H1 (cell line): ENCODE measurements at regions of chr1 and their contacts with region 1.

Region 1: DNA sequence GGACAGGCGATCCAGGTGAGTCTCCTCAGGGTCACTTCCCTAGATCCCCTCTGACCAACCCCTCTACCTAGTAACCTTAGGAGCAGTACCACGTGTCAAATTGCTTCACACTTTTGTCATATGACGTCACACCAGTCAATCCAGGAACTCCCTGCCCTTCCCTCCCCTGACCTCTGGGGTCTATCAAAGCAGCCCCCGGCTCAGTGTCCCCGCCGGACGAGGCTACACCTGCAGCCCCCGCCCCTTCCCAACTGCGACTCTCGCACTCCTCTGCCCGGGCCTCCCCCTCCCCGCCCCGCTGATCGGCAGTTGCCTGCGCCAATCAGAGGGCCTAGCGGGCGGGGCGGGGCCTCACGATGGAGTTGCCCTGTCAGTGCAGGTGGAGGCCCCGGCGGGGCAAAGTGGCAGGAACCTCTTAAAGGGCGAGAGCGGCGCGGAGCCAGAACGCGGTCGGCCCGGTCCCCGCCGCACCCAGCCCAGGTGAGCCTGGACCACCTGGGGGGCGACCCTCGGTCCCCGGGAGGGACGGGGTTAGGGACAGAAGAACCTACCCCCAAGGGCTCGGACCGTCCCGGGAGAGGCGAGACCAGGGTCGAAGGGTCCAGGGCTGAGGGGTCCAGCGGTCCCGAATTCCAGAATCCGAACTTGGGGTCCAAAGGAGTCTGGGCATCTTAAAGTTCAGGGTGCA is 27.5 kb upstream of the EPB41 start:
- DNase-seq: peak; percentile 70 to 98
- H3K4me3 ChIP-seq: peak overlapping the region; percentile 76 to 88 (median 76)
- H3K27ac ChIP-seq: no peak overlapping the region
- H3K4me1 ChIP-seq: peaks cover 18 to 27% (median 22%) of the 10 kb centered on the region in 4 experiments
- H3K27me3 ChIP-seq: peaks cover 0 to 11% (median 6%) of the 10 kb centered on the region in 4 experiments; a peak in 4 of 7 replicates
- CTCF ChIP-seq: no peak; a peak in 1 of 4 replicates
- EP300 ChIP-seq: no peak
- POLR2A ChIP-seq: no peak
- RAD21 ChIP-seq: no peak

Region 2: GRCh38 chr1:28680141-28680540 is 206.7 kb before region 1 on chr1:
- CTCF ChIA-PET with region 1: no interaction called
- POLR2A ChIA-PET with region 1: no interaction called
- DNase-seq: no peak
- H3K4me3 ChIP-seq: no peak overlapping the region
- H3K27ac ChIP-seq: no peak overlapping the region
- H3K4me1 ChIP-seq: no peaks in the 10 kb centered on the region
- H3K27me3 ChIP-seq: no peaks in the 10 kb centered on the region
- CTCF ChIP-seq: no peak
- EP300 ChIP-seq: no peak
- POLR2A ChIP-seq: no peak
- RAD21 ChIP-seq: no peak

Region 3: GRCh38 chr1:28703629-28704028 is 183.2 kb before region 1 on chr1:
- CTCF ChIA-PET with region 1: no interaction called
- POLR2A ChIA-PET with region 1: no interaction called
- DNase-seq: no peak
- H3K4me3 ChIP-seq: no peak overlapping the region
- H3K27ac ChIP-seq: no peak overlapping the region
- H3K4me1 ChIP-seq: no peaks in the 10 kb centered on the region
- H3K27me3 ChIP-seq: no peaks in the 10 kb centered on the region
- CTCF ChIP-seq: no peak
- EP300 ChIP-seq: no peak
- POLR2A ChIP-seq: no peak
- RAD21 ChIP-seq: no peak

Region 4: GRCh38 chr1:28792644-28793121 is 94.2 kb before region 1 on chr1:
- CTCF ChIA-PET with region 1: interaction called, 17 read pairs
- POLR2A ChIA-PET with region 1: no interaction called
- DNase-seq: no peak
- H3K4me3 ChIP-seq: no peak overlapping the region
- H3K27ac ChIP-seq: no peak overlapping the region
- H3K4me1 ChIP-seq: peaks cover 0 to 8% (median 2%) of the 10 kb centered on the region in 4 experiments; a peak in 2 of 7 replicates
- H3K27me3 ChIP-seq: no peaks in the 10 kb centered on the region
- CTCF ChIP-seq: no peak
- EP300 ChIP-seq: no peak
- POLR2A ChIP-seq: no peak
- RAD21 ChIP-seq: no peak

Region 5: GRCh38 chr1:28914228-28915030 is 27.6 kb after region 1 on chr1 and contains the start of gene EPB41:
- CTCF ChIA-PET with region 1: interaction called, 4 read pairs
- POLR2A ChIA-PET with region 1: interaction called, 10 read pairs
- DNase-seq: peak; percentile 96
- H3K4me3 ChIP-seq: peak within 1 kb of the TSS; percentile 78 to 95 (median 94)
- H3K27ac ChIP-seq: peak within 1 kb of the TSS; percentile 74
- H3K4me1 ChIP-seq: peaks cover 4 to 15% (median 7%) of the 10 kb centered on the region in 4 experiments; a peak in 5 of 7 replicates
- H3K27me3 ChIP-seq: no peaks in the 10 kb centered on the region
- CTCF ChIP-seq: no peak
- EP300 ChIP-seq: no peak
- POLR2A ChIP-seq: peak; percentile 78 to 90
- RAD21 ChIP-seq: no peak
- total RNA-seq, gene EPB41: 106 and 109 TPM in 2 replicates

Region 6: DNA sequence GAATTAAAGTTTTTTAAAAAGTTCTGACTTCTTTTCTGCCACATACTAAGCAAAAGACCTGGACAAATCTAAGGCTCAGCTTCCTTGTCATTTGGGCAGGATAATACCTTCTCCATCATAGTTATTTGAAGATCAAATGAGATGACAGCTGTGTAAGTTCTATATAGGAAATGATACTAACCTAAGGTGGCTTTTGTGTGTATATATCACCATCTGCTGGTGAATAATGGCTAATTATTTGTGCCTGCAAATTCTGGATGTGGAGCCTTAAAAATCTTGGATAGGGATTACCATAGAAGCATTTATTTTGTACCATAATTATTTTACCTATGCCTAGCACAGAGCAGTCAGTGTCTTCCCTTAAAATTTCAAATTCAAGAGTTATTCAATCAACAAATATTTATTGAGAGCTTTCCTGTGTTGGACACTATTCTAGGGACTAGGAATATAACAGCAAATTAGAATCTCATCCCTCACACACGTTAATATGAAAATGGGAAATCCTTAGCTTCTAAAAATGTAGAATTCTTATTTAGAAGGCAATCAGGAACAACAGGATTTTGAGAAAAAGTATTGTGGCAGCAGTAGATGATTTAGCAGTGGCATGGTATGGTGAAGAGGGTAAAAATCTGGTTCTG is 147.1 kb after region 1 on chr1:
- CTCF ChIA-PET with region 1: interaction called, 207 read pairs
- POLR2A ChIA-PET with region 1: interaction called, 8 read pairs
- DNase-seq: no peak
- H3K4me3 ChIP-seq: no peak overlapping the region
- H3K27ac ChIP-seq: no peak overlapping the region
- H3K4me1 ChIP-seq: no peaks in the 10 kb centered on the region; a peak in 1 of 7 replicates
- H3K27me3 ChIP-seq: no peaks in the 10 kb centered on the region
- CTCF ChIP-seq: peak in 2 of 3 experiments; percentile 38 to 44; a peak in 2 of 4 replicates
- EP300 ChIP-seq: no peak
- POLR2A ChIP-seq: no peak
- RAD21 ChIP-seq: peak; percentile 81 to 83

Region 7: GRCh38 chr1:29117381-29117780 is 230.5 kb after region 1 on chr1:
- CTCF ChIA-PET with region 1: interaction called, 18 read pairs
- POLR2A ChIA-PET with region 1: interaction called, 7 read pairs
- DNase-seq: no peak
- H3K4me3 ChIP-seq: no peak overlapping the region
- H3K27ac ChIP-seq: no peak overlapping the region
- H3K4me1 ChIP-seq: peaks cover 2 to 5% (median 3%) of the 10 kb centered on the region in 4 experiments; a peak in 4 of 7 replicates
- H3K27me3 ChIP-seq: peaks cover 0 to 17% (median 11%) of the 10 kb centered on the region in 4 experiments; a peak in 6 of 7 replicates
- CTCF ChIP-seq: peak in 2 of 3 experiments; percentile 30 to 47; a peak in 2 of 4 replicates
- EP300 ChIP-seq: no peak
- POLR2A ChIP-seq: no peak
- RAD21 ChIP-seq: peak; percentile 35 to 54; a peak in 3 of 4 replicates

Region 8: DNA sequence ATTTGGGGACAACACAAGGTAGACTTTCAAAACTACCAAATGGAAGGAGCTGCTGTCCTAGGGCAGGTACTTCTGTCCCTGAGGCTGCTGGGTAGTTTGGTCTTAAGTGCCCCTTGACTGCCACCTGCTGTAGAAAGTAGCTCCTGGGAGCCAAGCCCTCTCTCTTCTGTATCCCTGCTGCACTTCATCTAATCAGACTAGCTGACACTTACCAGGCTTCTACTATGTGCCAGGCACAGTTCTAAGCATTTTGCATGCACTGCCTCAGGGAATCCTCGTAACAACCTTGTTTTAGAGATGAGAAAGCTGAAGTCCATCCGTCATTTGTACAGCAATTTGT is 310.7 kb after region 1 on chr1:
- CTCF ChIA-PET with region 1: interaction called, 13 read pairs
- POLR2A ChIA-PET with region 1: interaction called, 4 read pairs
- DNase-seq: no peak
- H3K4me3 ChIP-seq: no peak overlapping the region
- H3K27ac ChIP-seq: no peak overlapping the region
- H3K4me1 ChIP-seq: peaks cover 0 to 5% (median 1%) of the 10 kb centered on the region in 4 experiments; a peak in 2 of 7 replicates
- H3K27me3 ChIP-seq: no peaks in the 10 kb centered on the region
- CTCF ChIP-seq: peak; percentile 49 to 77 (median 69)
- EP300 ChIP-seq: no peak
- POLR2A ChIP-seq: no peak
- RAD21 ChIP-seq: peak; percentile 72 to 79